ENCODE measurements at regions of chr5 and their contacts with region 1.

Region 1: DNA sequence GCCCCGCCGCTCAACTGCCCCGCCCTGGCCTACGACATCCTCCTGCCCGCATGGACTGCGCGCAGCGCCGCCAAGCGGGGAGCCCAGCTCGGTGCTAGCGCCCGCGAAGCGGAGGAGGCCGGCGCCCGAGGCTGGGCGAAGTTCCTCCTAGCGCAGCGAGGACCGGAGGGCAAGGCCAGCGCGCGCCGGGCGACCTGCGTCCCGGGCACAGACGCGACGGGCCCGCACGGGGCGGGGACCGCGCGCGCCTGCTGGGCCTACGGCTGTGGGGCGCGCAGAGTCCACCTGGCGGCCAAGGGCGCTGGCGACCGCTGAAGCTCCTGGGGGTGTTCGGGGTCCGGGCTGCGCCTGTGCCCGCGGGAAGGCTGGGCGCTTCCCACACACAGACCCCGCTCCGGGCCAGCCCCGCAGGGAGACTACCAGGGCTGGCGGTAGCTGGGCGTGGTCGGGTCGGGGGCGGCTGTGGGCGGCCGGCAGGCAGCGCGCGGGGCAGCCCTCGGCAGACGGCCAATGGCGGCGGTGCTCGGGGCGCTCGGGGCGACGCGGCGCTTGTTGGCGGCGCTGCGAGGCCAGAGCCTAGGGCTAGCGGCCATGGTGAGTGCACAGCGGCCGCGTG is at the start of gene PCBD2:
- DNase-seq: peak; percentile 96
- ATAC-seq: peak; percentile 89
- H3K4me3 Mint-ChIP-seq: peak within 1 kb of the TSS; percentile 94
- H3K27ac Mint-ChIP-seq: peak within 1 kb of the TSS; percentile 99
- H3K4me1 Mint-ChIP-seq: peaks cover 27% of the 10 kb centered on the region
- H3K27me3 Mint-ChIP-seq: no peaks in the 10 kb centered on the region
- total RNA-seq, gene PCBD2: 13.4 to 13.7 TPM

Region 2: GRCh38 chr5:134758504-134759341 is 146.0 kb before region 1 on chr5 and contains the start of gene DDX46:
- CTCF ChIA-PET with region 1: interaction called, 31 read pairs
- DNase-seq: peak; percentile 96
- ATAC-seq: peak; percentile 99
- H3K4me3 Mint-ChIP-seq: peak within 1 kb of the TSS; percentile 100
- H3K27ac Mint-ChIP-seq: peak within 1 kb of the TSS; percentile 94
- H3K4me1 Mint-ChIP-seq: peaks cover 37% of the 10 kb centered on the region
- H3K27me3 Mint-ChIP-seq: no peaks in the 10 kb centered on the region
- total RNA-seq, gene DDX46: 75.9 to 77.0 TPM

Region 3: DNA sequence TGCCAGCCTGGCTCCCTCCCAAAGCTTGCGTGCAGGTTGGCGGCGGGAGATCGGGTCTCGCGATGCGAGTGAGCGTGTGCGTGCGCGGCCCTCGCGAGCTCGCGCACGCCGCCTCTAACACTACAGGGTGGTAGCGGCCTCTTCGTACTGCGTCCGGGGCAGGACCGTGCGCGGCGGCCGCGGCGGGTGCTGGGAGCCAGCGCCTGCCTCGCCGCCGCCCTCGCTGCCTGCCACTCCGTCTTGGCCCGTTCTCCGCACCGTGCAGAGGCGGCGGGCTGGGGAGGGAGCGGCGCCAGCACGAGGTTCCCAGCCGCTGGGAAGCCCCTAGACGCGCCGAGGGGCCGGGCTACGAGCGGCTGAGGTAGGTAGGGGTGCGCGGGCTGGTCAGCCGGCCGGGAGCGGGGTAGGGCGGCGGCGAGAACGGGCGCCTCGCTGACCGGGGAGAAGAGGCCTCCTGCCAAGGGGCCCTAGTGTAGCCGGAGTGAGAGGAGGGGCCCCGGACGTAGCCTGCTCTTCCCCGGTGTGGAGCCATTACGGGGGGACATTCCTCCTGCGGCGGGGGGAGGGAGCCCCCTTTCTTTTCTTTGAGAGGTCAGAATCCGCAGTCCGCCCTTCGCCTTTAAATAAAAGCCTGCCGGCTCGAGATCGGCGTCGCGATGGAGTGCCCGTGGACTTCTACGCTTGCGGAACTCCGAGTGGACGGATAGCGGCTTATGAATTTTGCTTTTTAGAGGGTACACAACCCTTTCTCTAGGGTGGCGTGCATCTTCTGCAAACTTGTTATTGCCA is 58.7 kb before region 1 on chr5 and contains the start of gene C5orf24:
- CTCF ChIA-PET with region 1: interaction called, 15 read pairs
- DNase-seq: peak; percentile 96
- ATAC-seq: peak; percentile 97
- H3K4me3 Mint-ChIP-seq: peak within 1 kb of the TSS; percentile 86
- H3K27ac Mint-ChIP-seq: peak within 1 kb of the TSS; percentile 97
- H3K4me1 Mint-ChIP-seq: peaks cover 37% of the 10 kb centered on the region
- H3K27me3 Mint-ChIP-seq: no peaks in the 10 kb centered on the region
- total RNA-seq, gene C5orf24: 29.7 to 30.1 TPM

Region 4: GRCh38 chr5:134873987-134874830 is 30.5 kb before region 1 on chr5 and contains the start of gene TXNDC15:
- CTCF ChIA-PET with region 1: interaction called, 17 read pairs
- DNase-seq: peak; percentile 88
- ATAC-seq: peak; percentile 92
- H3K4me3 Mint-ChIP-seq: peak within 1 kb of the TSS; percentile 90
- H3K27ac Mint-ChIP-seq: peak within 1 kb of the TSS; percentile 97
- H3K4me1 Mint-ChIP-seq: peaks cover 45% of the 10 kb centered on the region
- H3K27me3 Mint-ChIP-seq: no peaks in the 10 kb centered on the region
- total RNA-seq, gene TXNDC15: 50.0 to 56.8 TPM

Region 5: DNA sequence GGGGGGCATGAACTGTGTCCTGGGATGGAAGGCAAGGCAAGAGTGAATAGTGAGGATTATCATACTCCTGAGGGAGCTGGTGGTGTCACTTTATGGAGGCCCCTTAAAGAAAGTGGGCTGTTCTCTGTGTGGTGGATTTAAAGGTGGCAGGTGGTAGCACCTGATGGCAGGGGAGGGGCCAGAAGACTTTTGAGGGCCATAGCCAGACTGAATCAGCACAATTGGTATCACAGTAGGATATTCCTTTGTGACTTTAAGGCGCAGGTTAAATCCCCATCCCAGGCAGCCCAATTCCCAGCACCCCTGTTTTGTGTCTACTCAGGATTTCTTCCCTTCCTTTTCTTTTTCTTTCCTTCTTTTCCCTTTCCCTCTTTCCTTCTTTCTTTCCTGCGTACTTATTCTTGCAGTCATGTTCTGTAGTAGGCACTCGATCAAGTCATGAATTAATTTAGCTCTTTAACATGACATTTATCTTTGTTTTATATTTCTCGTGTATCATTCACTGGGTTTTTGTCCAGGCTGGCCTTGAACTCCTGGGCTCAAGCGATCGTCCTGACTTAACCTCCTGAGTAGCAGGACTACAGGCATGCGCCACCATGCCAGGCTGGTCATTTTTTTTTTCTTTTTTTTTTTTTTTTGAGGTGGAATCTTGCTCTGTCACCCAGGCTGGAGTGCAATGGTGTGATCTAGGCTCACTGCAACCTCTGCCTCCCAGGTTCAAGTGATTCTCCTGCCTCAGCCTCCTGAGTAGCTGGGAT is 10.8 kb before region 1 on chr5:
- CTCF ChIA-PET with region 1: interaction called, 20 read pairs
- DNase-seq: no peak
- ATAC-seq: no peak
- H3K4me3 Mint-ChIP-seq: no peak overlapping the region
- H3K27ac Mint-ChIP-seq: no peak overlapping the region
- H3K4me1 Mint-ChIP-seq: no peaks in the 10 kb centered on the region
- H3K27me3 Mint-ChIP-seq: no peaks in the 10 kb centered on the region

Measured in activated CD8-positive, alpha-beta memory T cell treated with anti-CD3 and anti-CD28 coated beads, Interleukin-2, amount 10 ng/mL, durations not matched to agents 7 days and 5 days (primary cell).